Activated CD4-positive, alpha-beta T cell treated with anti-CD3 and anti-CD28 coated beads, Interleukin-2, amount 10 ng/mL, durations not matched to agents 24 days and 14 days (primary cell): ENCODE measurements at regions of chr12 and their contacts with region 1.

Region 1: DNA sequence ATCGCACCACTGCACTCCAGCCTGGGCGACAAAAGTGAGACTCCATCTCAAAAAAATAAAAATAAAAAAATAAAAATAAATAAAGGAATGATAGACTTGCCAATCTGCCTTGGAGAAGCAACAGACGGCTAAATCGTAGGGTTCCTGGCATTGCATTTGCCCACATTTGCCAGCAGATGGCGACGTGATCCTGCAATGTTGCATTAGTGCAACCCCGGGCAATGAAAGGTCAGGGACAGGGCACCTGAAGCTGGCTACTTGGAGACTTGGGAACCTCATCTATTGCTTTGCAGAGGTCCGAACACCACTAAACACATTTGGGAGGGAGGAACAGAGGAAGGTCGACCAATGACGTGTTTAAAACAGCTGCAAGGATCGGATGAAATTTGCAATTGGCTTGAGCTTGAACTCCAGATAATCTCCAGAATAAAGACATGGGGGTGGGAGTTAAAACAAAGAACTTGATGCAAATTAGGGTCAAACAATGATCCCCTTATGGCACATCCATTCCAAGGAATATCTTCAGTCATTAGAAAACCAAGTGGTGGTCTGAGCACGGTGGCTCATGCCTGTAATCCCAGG is 34.6 kb downstream of the SPRING1 start:
- DNase-seq: peak; percentile 90
- H3K4me3 Mint-ChIP-seq: no peak overlapping the region
- H3K27ac Mint-ChIP-seq: no peak overlapping the region
- H3K4me1 Mint-ChIP-seq: no peaks in the 10 kb centered on the region
- H3K27me3 Mint-ChIP-seq: peaks cover 14% of the 10 kb centered on the region

Region 2: GRCh38 chr12:116737774-116738700 is 34.7 kb after region 1 on chr12 and contains the starts of genes RNFT2 and SPRING1:
- intact Hi-C with region 1: no loop called
- DNase-seq: peak; percentile 100
- H3K4me3 Mint-ChIP-seq: peak within 1 kb of the TSS; percentile 87
- H3K27ac Mint-ChIP-seq: peak within 1 kb of the TSS; percentile 89
- H3K4me1 Mint-ChIP-seq: peaks cover 13% of the 10 kb centered on the region
- H3K27me3 Mint-ChIP-seq: no peaks in the 10 kb centered on the region
- total RNA-seq, gene RNFT2: 10.1 and 11.6 TPM in 2 replicates
- total RNA-seq, gene SPRING1: 28.6 and 29.2 TPM in 2 replicates

Region 3: GRCh38 chr12:116882742-116883141 is 179.4 kb after region 1 on chr12:
- intact Hi-C with region 1: loop called (anchors 2 kb)
- DNase-seq: no peak
- H3K4me3 Mint-ChIP-seq: no peak overlapping the region
- H3K27ac Mint-ChIP-seq: no peak overlapping the region
- H3K4me1 Mint-ChIP-seq: peaks cover 25% of the 10 kb centered on the region
- H3K27me3 Mint-ChIP-seq: peaks cover 76% of the 10 kb centered on the region

Region 4: GRCh38 chr12:116955382-116956021 is 252.2 kb after region 1 on chr12:
- intact Hi-C with region 1: loop called (anchors 5 kb)
- DNase-seq: peak; percentile 70
- H3K4me3 Mint-ChIP-seq: no peak overlapping the region
- H3K27ac Mint-ChIP-seq: no peak overlapping the region
- H3K4me1 Mint-ChIP-seq: peaks cover 19% of the 10 kb centered on the region
- H3K27me3 Mint-ChIP-seq: no peaks in the 10 kb centered on the region

Region 5: GRCh38 chr12:117025481-117026151 is 322.3 kb after region 1 on chr12:
- intact Hi-C with region 1: loop called (anchors 1 kb)
- DNase-seq: peak; percentile 83
- H3K4me3 Mint-ChIP-seq: no peak overlapping the region
- H3K27ac Mint-ChIP-seq: peak overlapping the region; percentile 75
- H3K4me1 Mint-ChIP-seq: peaks cover 2% of the 10 kb centered on the region
- H3K27me3 Mint-ChIP-seq: no peaks in the 10 kb centered on the region

Region 6: DNA sequence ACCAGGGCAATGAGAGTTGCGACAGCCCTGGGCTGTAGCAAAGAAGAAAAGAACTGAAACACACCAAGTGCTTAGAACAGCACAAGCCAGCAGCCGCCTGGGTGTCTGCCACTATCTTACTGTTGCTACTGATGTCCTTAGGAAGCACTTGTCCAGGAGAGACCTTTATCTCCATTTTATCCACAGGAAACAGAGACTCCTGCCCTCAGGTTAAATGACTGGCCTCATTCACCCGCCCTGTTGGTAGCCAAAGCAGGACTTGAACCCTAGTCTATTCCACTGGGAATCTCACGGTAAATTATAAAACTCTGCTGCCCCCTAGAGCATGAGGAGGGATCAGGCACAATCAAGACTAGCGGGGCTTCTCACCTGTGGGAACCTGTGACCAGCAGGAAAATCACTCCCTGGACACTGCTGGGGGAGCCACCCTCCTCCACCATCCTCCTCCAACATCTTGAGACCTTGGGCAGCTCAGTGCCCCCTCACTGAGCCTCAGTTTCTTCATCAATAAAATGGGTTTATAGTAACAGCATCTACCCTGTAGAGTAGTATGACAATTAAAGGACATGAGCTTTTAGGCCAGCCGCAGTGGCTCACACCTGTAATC is 416.4 kb after region 1 on chr12:
- intact Hi-C with region 1: loop called (anchors 1 kb)
- DNase-seq: peak; percentile 81
- H3K4me3 Mint-ChIP-seq: no peak overlapping the region
- H3K27ac Mint-ChIP-seq: no peak overlapping the region
- H3K4me1 Mint-ChIP-seq: peaks cover 5% of the 10 kb centered on the region
- H3K27me3 Mint-ChIP-seq: no peaks in the 10 kb centered on the region